ENCODE measurements at regions of chr11 and their contacts with region 1.

Region 1: GRCh38 chr11:67317205-67317887 is 14.0 kb downstream of the SSH3 start:
- DNase-seq: peak; percentile 97 to 98
- H3K4me3 ChIP-seq: peak overlapping the region; percentile 59
- H3K4me1 ChIP-seq: peaks cover 3% of the 10 kb centered on the region; the same call in 1 of the 2 replicates
- H3K27me3 ChIP-seq: no peaks in the 10 kb centered on the region

Region 2: GRCh38 chr11:67082035-67082791 is 235.1 kb before region 1 on chr11:
- in situ Hi-C with region 1: loop called (anchors 10 kb)
- DNase-seq: peak in 1 of 2 experiments; percentile 55
- H3K4me3 ChIP-seq: no peak overlapping the region
- H3K4me1 ChIP-seq: peaks cover 5% of the 10 kb centered on the region; the same call in 1 of the 2 replicates
- H3K27me3 ChIP-seq: no peaks in the 10 kb centered on the region

Region 3: DNA sequence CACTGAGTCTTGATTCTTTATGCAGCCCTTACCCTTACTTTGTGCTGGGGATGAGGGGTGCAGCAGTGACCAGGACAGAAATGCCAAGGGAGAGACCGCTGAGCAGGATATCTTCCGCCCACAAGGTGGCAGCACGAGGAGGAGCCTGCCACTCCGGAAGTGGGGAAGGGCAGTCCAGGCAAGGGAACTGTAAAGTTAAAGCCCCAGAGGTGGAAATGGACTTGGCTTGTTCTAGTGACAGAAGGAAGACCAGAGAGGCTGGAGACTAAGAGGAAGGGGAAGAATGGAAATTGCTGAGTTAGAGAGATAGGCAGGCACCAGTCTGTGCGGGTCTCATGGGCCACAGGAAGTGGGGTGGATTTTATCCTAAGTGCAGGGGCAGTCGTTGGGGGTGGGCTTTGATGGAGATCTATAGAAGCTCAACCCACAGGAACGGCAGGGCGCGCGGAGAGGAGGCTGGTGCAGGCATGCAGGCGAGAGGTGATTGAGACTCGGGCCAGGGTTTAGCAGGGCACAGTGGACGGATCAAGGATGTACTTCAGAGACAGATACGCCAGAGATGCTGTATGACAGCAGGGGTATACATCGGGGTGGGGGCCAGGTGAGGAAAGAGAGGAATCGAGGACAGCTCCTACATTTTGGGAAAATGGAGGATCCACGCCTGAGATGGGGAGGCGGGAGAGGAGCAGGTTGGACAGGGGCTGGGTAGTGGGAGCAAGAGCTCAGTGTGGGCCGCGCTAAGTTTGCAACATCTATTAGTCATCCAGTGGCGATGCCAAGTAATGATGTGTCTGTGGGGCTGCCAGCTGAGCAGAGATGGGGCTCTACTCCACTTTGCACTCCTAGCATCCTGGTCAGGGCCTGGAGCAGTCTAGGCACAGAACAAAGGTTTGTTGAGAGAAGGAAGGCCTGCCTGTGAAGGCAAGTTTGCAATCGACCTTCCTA is 54.3 kb before region 1 on chr11:
- in situ Hi-C with region 1: loop called (anchors 5 kb)
- DNase-seq: peak; percentile 75 to 91
- H3K4me3 ChIP-seq: no peak overlapping the region
- H3K4me1 ChIP-seq: peaks cover 3% of the 10 kb centered on the region
- H3K27me3 ChIP-seq: no peaks in the 10 kb centered on the region

Region 4: DNA sequence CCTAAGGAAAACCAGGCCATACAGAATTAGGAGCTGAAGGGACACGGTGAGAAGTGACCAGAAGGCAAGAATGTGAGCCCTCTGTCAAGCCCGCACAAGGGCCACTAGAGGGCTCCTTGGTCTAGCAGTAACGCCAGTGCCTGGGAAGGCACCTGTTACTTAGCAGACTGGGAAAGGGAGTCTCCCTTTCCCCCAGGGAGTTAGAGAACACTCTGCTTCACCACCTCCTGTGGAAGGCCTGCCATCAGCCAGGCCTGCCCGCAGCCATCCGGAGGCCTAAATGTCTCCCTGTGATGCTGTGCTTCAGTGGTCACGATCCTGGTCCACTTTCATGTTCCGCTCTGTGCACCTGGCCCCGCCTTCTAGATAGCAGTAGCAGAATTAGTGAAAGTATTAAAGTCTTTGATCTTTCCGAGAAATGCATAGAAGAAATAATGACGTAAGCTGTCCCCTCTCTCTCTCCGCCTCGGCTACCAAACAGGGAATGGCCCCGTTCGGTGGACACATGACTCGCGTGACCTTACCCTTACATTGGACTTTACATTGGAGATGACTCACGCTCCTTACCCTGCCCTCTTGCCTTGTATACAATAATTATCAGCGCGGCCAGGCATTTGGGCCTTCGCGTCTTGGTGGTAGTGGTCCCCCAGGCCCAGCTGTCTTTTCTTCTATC is 255.5 kb after region 1 on chr11:
- in situ Hi-C with region 1: no loop called
- DNase-seq: peak; percentile 78 to 80
- H3K4me3 ChIP-seq: no peak overlapping the region
- H3K4me1 ChIP-seq: peaks cover 11% of the 10 kb centered on the region
- H3K27me3 ChIP-seq: no peaks in the 10 kb centered on the region

Region 5: DNA sequence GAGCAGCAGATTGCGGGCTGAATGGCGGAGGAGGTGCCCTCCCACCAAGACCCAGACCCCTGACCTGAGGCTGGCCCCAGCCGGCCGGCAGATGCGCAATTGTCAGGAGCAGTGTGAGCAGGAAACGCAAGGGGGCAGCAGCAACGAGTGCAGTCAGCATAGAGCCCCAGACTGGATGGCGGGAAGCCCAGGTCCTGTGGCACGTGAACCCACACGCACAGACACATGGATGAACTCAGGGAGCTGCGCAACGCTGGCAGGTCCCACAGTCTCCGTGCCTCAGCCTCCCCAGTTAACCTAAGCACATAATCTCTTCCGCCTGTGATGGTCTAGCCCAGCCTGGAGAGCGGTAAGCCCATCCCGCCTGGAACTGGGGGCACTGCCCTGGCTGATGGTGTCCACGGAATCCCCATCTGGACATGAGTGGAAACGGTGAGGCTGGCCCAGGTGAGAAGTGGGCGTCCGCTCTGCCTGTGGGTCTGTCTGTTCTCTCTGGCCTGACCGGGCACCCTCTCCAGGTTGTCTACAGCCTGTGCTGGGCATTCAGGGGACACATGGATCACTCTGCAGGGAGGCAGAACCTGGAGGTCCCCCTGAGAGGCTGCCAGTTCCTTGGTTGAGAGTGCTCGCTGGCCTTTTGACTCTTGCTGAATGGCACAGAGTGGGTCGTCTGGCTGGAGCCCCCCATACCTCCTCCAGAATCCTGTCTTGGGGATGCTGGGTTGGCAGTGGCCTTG is 322.8 kb after region 1 on chr11:
- in situ Hi-C with region 1: no loop called
- DNase-seq: peak; percentile 50 to 87
- H3K4me3 ChIP-seq: no peak overlapping the region
- H3K4me1 ChIP-seq: no peaks in the 10 kb centered on the region
- H3K27me3 ChIP-seq: 0 out of 2 replicates have a peak, but pooled peaks cover 2% of the 10 kb centered on the region

Measured in HAP-1 (cell line).